ENCODE measurements at regions of chr17 and their contacts with region 1.

Region 1: DNA sequence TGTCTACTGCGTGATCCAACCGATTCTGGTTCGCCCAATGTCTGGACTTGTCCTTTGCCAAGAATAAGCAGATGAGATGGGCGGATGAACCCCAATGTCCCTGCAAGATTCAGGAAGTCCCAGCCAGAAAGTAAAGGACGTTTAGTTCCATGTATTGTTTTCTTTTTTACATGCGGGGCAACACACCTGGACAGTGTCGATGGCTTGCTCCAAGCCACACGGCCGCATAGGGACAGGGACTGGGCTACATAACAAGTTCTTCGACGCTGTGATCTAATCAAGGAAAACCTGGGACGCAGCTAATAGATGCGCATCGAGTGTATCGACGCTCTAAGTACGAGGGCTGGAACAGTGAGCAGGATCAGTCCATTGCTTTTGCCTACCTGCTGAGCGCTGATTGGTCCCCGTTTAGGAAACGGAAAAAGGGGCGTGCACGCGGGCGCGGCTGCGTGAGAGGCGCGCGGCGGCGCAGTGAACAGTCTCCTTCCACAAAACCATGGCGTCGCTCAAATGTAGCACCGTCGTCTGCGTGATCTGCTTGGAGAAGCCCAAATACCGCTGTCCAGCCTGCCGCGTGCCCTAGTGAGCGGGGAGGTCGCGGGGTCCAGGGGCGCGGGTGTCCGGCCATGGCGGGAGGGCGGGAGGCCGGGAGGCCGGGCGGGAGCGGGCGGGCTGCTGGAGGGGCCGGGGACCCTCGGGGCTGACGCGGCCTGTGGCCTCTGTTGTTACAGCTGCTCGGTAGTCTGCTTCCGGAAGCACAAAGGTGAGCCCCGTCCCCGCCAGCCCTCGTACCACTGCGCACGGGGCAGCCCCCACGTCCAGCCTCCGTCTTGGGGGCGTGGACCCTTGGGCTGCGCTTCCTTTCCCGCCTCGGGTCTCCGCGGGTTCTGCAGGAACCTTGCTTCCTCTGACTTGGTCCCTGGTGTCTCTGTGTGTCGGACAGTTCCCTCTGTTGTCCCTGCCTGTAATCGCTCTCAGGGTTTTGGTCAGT is at the start of gene ZNHIT3:
- DNase-seq: peak; percentile 97
- H3K4me3 ChIP-seq: peak within 1 kb of the TSS; percentile 76 to 97 (median 94)
- H3K27ac ChIP-seq: peak within 1 kb of the TSS; percentile 72 to 93 (median 89)
- H3K4me1 ChIP-seq: peaks cover 27 to 77% (median 56%) of the 10 kb centered on the region in 6 donors
- H3K27me3 ChIP-seq: peaks cover 0 to 22% (median 12%) of the 10 kb centered on the region in 7 donors
- CTCF ChIP-seq: peak in 2 of 11 experiments; percentile 23 to 25
- POLR2A ChIP-seq: peak in 1 of 3 donors; percentile 35
- total RNA-seq, gene ZNHIT3: 24.2 to 42.4 (median 28.6) TPM

Region 2: DNA sequence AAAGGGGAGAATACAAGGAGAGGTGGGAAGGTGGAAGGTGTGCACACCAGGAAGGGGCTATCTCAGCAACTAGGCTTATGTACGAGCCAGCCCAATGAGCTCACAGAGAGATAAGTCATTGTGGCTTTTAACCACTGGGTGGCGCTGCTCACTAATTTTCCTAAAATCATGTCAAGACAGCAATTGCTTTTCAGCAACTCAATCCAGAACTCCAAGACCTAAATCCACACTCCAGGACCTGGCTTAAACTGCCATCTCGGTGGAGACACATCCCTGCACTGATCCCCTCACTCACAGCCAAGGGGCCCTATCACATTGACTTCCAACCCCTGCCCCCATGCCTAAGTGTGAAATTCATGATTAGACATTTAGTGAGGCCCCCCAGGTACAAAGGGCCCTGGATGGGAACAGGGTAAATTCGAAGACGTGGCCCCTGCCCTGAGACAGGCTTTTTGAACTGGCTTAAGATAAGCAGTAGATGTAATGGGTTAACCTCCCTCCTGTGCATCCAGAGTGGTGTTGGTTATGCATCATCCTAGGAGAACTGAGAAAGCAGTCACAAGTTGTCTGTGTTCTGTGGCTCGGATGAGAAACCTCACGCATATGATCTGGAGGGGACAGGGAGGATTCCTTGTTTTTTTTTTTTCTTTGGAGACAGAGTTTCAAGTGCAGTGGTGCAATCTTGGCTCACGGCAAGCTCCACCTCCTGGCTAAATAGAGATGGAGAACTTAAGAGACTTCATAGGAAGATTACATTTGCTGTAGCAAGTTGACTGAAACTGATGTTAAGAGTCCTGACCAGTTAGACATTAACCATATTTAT is 516.7 kb before region 1 on chr17:
- intact Hi-C with region 1: loop called (anchors 10 kb)
- DNase-seq: peak; percentile 84
- H3K4me3 ChIP-seq: no peak overlapping the region
- H3K27ac ChIP-seq: no peak overlapping the region
- H3K4me1 ChIP-seq: peaks cover 6 to 30% (median 16%) of the 10 kb centered on the region in 6 donors
- H3K27me3 ChIP-seq: peaks cover 0 to 7% (median 0%) of the 10 kb centered on the region in 7 donors
- CTCF ChIP-seq: peak; percentile 73 to 93 (median 86)
- POLR2A ChIP-seq: no peak

Region 3: DNA sequence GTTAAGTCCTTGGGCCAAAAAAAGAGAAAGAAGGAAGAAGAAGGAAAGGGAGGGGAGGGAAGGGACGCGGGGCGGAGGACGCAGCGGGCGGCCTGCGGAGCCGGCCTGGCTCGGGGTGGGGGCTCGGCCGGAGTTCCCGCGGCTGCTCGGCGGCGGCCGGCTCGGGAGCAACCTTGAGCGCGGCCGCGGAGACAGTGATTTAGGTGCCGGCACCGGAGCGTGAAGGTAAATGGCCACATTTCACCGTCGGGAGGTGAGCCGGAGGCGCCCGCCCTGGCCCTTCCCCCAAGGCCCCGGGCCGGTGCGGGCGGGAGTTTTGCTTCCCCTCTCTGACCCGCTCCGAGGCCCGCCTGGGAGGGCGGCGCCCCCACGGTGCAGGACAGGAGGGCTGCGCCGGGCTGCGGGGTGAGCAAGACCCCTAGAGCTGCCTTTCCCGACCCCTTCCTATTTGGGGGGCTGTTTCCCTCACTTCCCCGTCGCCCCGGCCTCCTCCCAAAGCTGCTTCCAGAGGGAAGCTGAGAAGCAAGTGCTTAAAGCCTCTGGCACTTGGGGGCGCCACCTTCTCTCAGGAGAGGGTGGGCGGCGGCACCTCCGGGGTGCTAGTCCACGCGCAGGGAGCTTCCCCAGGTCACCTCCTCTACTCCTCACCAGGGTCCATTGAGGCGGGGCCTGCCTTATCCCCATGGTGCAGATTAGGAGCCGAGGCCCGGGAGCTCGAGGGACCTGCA is 171.4 kb after region 1 on chr17:
- intact Hi-C with region 1: no loop called
- DNase-seq: no peak
- H3K4me3 ChIP-seq: peak overlapping the region in 7 of 8 donors; percentile 14 to 62 (median 30)
- H3K27ac ChIP-seq: no peak overlapping the region
- H3K4me1 ChIP-seq: peaks cover 0 to 10% (median 9%) of the 10 kb centered on the region in 6 donors
- H3K27me3 ChIP-seq: peaks cover 0 to 83% (median 22%) of the 10 kb centered on the region in 7 donors
- CTCF ChIP-seq: no peak
- POLR2A ChIP-seq: no peak

Measured in spleen (tissue), 13 donors.